ENCODE measurements at regions of chr4 and their contacts with region 1.

Region 1: GRCh38 chr4:163191999-163192398 is 25.3 kb upstream of the NAF1 start:
- DNase-seq: peak; percentile 39
- ATAC-seq: peak; percentile 76
- H3K4me3 ChIP-seq: no peak overlapping the region
- H3K27ac ChIP-seq: no peak overlapping the region
- H3K4me1 ChIP-seq: no peaks in the 10 kb centered on the region
- H3K27me3 ChIP-seq: no peaks in the 10 kb centered on the region
- CTCF ChIP-seq: peak; percentile 72
- POLR2A ChIP-seq: no peak
- RAD21 ChIP-seq: peak; percentile 74

Region 2: DNA sequence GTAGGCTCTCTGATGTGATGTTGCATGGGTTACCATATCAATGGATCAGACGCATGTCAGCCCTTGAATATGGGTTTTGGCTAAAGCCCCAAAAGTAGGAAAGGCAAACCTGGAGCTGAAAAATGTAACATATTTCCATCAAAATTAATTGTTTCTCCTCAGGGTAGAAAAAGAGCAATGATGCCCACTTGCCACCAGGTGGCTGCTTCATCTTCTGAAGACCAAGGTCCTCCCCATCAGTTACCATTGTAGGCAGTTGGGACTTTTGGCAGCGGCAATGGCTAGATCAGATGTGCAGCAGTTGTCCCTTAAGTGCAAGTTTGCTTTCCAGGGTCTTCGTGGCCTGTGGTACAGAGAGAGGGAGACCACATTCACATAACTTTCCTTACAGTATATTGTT is 143.6 kb before region 1 on chr4:
- CTCF ChIA-PET with region 1: no interaction called
- POLR2A ChIA-PET with region 1: no interaction called
- dilution Hi-C with region 1: no loop called
- in situ Hi-C with region 1: no loop called
- intact Hi-C with region 1: loop called (anchors 1 kb)
- DNase-seq: peak; percentile 19
- ATAC-seq: peak; percentile 51; the same call in 1 of the 2 replicates
- H3K4me3 ChIP-seq: no peak overlapping the region
- H3K27ac ChIP-seq: no peak overlapping the region
- H3K4me1 ChIP-seq: no peaks in the 10 kb centered on the region
- H3K27me3 ChIP-seq: no peaks in the 10 kb centered on the region
- CTCF ChIP-seq: peak; percentile 59
- POLR2A ChIP-seq: no peak
- RAD21 ChIP-seq: peak; percentile 53

Region 3: DNA sequence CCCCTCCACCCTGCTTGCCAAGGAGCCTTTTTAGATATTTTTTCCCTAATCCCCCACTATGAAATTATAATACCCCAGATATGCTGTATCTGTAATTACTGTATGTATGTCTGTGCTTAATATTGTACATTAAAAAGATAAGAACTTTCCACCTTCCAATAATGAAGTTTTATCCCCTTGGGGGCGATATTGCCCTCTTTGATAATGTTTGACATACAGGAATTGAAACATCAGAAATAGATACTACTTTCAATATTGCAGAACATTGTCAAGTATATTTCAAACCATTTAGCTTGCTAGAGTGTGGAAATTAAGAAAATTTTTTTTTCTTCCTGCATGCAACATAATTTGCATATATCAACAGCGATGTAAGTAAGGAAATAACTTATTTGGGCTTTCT is 84.2 kb before region 1 on chr4:
- CTCF ChIA-PET with region 1: interaction called, 3 read pairs
- POLR2A ChIA-PET with region 1: no interaction called
- dilution Hi-C with region 1: no loop called
- in situ Hi-C with region 1: no loop called
- intact Hi-C with region 1: loop called (anchors 1 kb)
- DNase-seq: peak; percentile 46
- ATAC-seq: peak; percentile 46; the same call in 1 of the 2 replicates
- H3K4me3 ChIP-seq: no peak overlapping the region
- H3K27ac ChIP-seq: no peak overlapping the region
- H3K4me1 ChIP-seq: no peaks in the 10 kb centered on the region
- H3K27me3 ChIP-seq: no peaks in the 10 kb centered on the region
- CTCF ChIP-seq: peak; percentile 54
- POLR2A ChIP-seq: no peak
- RAD21 ChIP-seq: peak; percentile 58

Measured in IMR-90 (cell line).